Heart left ventricle (tissue), 16 donors: ENCODE measurements at regions of chr18 and their contacts with region 1.

Region 1: GRCh38 chr18:47870605-47871004 is 59.9 kb downstream of the SMAD2 start:
- DNase-seq: no peak
- ATAC-seq: no peak
- H3K4me3 ChIP-seq: no peak overlapping the region
- H3K27ac ChIP-seq: no peak overlapping the region
- H3K4me1 ChIP-seq: peaks cover 0 to 27% (median 8%) of the 10 kb centered on the region in 12 donors
- H3K27me3 ChIP-seq: no peaks in the 10 kb centered on the region
- CTCF ChIP-seq: no peak
- POLR2A ChIP-seq: no peak

Region 2: DNA sequence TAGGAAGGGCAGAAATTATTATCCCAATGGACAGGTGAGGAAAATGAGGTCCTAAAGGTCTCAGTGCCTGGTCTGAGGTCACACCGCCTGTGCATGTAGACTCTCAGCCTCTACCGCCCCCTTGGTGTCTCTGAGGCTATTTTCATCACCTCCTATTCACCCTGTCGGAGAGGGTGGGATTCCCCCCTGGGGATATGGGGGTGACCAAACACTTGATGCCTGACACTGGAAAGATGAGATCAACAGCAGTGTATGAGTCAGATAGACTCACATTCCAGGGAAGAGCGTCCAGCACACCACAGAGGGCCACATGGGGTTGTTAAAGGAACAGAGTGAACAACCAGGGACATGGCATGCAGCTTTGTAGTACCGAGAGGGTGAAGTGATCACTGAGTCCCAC is 139.8 kb before region 1 on chr18:
- intact Hi-C with region 1: no loop called
- DNase-seq: no peak
- ATAC-seq: no peak
- H3K4me3 ChIP-seq: no peak overlapping the region
- H3K27ac ChIP-seq: no peak overlapping the region
- H3K4me1 ChIP-seq: no peaks in the 10 kb centered on the region
- H3K27me3 ChIP-seq: peaks cover 0 to 57% (median 0%) of the 10 kb centered on the region in 9 donors
- CTCF ChIP-seq: no peak
- POLR2A ChIP-seq: no peak

Region 3: GRCh38 chr18:47775961-47776360 is 94.6 kb before region 1 on chr18:
- intact Hi-C with region 1: no loop called
- DNase-seq: no peak
- ATAC-seq: peak in 2 of 4 donors; percentile 14 to 51
- H3K4me3 ChIP-seq: no peak overlapping the region
- H3K27ac ChIP-seq: no peak overlapping the region
- H3K4me1 ChIP-seq: no peaks in the 10 kb centered on the region
- H3K27me3 ChIP-seq: peaks cover 0 to 4% (median 0%) of the 10 kb centered on the region in 9 donors
- CTCF ChIP-seq: peak in 6 of 12 donors; percentile 12 to 40 (median 30)
- POLR2A ChIP-seq: no peak

Region 4: GRCh38 chr18:47912343-47912742 is 41.7 kb after region 1 on chr18:
- intact Hi-C with region 1: loop called in 1 of 10 experiments (anchors 5 kb)
- DNase-seq: no peak
- ATAC-seq: peak; percentile 28 to 60 (median 50)
- H3K4me3 ChIP-seq: no peak overlapping the region
- H3K27ac ChIP-seq: peak overlapping the region; percentile 50 to 79 (median 74)
- H3K4me1 ChIP-seq: peaks cover 0 to 80% (median 55%) of the 10 kb centered on the region in 12 donors
- H3K27me3 ChIP-seq: no peaks in the 10 kb centered on the region
- CTCF ChIP-seq: no peak
- POLR2A ChIP-seq: no peak

Region 5: DNA sequence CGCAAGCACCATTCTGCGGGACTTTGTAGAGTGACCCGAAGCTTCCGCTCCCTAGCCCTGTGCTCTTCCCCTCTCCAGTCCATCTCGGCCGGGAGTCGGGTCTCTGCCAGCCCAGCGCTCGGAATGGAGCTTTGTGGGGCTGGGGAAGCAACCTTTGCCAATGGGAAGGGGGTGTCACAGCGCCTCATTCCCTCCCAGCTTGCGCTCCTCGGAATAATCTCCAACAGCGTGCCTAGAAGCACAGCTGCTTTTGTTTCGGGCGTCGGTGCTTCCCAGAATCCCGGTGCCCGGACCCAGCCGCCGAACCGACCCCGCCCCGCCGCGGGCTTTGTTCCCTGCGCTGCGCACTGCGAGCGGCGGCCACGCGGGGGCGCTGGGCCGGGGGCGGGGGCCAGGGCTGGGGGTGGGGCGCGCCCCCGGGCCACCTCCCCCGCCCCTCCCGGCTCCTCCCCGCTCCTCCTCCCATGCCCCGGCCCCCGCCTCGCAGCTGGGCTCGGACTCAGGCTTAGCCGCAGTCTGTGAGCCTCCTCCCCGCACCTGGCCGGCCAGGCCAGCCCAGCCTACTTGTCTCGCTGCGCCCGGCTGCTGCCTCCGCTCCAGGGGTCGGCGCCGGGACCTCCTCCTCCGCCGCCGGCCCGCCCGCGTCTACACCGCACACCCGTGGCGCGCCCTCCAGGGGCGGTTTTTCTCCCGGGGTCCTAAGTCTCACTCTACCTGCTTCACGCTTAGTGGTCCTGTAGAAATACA is 137.5 kb after region 1 on chr18:
- intact Hi-C with region 1: loop called in 2 of 10 experiments (anchors 10 kb)
- DNase-seq: peak; percentile 67 to 78 (median 76)
- ATAC-seq: peak; percentile 50 to 90 (median 72)
- H3K4me3 ChIP-seq: peak overlapping the region; percentile 38 to 73 (median 58)
- H3K27ac ChIP-seq: peak overlapping the region in 7 of 12 donors; percentile 25 to 77 (median 53)
- H3K4me1 ChIP-seq: peaks cover 0 to 28% (median 11%) of the 10 kb centered on the region in 12 donors
- H3K27me3 ChIP-seq: no peaks in the 10 kb centered on the region
- CTCF ChIP-seq: peak; percentile 29 to 96 (median 74)
- POLR2A ChIP-seq: no peak